AG04450 (cell line): ENCODE measurements at regions of chr6 and their contacts with region 1.

Region 1: GRCh38 chr6:14046476-14047068 is 71.0 kb upstream of the CD83 start:
- DNase-seq: no peak
- H3K4me3 ChIP-seq: no peak overlapping the region
- H3K27ac ChIP-seq: no peak overlapping the region
- H3K27me3 ChIP-seq: no peaks in the 10 kb centered on the region
- CTCF ChIP-seq: peak; percentile 84

Region 2: DNA sequence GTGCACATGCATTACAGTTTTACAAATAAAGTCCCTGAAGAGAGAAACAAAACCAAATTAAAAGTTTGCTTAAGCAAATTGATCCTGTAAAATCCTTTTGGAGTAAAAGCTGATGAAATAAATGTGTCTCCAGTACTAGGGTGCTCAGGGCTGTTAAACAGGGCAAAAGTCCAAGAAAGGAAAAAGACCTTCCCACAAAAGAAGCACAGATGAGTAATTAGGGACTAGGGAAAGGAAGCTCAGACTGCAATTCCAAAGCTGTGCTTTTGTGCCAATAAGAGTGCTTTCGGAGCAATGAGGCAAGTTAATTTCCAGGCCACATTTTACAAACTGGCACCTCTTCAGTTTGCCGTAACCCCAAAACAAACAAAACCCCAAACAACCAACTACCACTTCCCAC is 132.2 kb before region 1 on chr6:
- CTCF ChIA-PET with region 1: interaction called, 130 read pairs
- POLR2A ChIA-PET with region 1: no interaction called
- DNase-seq: no peak
- H3K4me3 ChIP-seq: no peak overlapping the region
- H3K27ac ChIP-seq: no peak overlapping the region
- H3K27me3 ChIP-seq: no peaks in the 10 kb centered on the region
- CTCF ChIP-seq: no peak

Region 3: DNA sequence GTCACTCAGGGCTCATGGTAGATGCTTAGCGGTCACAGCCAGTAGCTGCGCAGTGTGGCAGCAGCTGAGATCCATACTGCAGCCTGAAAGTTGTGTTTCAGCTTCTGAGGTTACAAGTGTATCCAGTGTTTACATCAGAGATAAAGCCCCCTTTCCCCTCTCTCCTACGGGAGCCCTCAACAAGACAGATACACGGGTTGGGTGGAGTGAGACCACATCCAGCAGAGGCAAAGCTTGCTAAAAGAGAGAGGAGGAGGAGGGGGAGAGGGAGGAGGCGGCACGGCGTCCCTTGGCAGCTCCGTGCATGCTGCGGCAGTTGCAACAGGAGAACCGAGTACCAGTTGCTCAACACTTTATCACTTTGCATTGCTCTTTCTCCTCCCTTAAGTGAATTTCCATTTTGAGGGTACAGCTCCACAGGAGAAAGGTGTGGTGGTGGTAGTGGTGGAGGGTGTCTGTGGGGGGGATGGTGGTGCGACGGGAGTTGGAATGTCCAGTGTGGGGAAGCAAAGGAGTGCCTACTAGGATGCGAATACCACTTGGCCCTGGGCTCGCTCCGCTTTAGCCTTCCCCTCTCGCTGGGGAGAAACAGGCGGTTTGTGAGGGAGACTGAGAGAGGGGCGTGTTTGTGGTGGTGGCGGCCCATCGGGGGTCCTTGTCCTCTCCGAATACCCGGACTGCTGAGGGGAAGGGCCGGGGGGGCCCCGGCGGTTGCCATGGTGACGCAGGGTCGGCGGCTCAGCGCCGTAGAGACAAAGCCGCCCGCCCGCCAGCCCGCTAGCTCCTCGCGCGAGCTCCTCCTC is 122.2 kb before region 1 on chr6:
- CTCF ChIA-PET with region 1: interaction called, 38 read pairs
- POLR2A ChIA-PET with region 1: no interaction called
- DNase-seq: no peak
- H3K4me3 ChIP-seq: peak overlapping the region; percentile 63
- H3K27ac ChIP-seq: peak overlapping the region; percentile 62
- H3K27me3 ChIP-seq: no peaks in the 10 kb centered on the region
- CTCF ChIP-seq: no peak

Region 4: GRCh38 chr6:14058029-14058695 is 11.6 kb after region 1 on chr6:
- CTCF ChIA-PET with region 1: interaction called, 81 read pairs
- POLR2A ChIA-PET with region 1: no interaction called
- DNase-seq: no peak
- H3K4me3 ChIP-seq: no peak overlapping the region
- H3K27ac ChIP-seq: no peak overlapping the region
- H3K27me3 ChIP-seq: no peaks in the 10 kb centered on the region
- CTCF ChIP-seq: no peak

Region 5: GRCh38 chr6:14086701-14087100 is 40.1 kb after region 1 on chr6:
- CTCF ChIA-PET with region 1: no interaction called
- POLR2A ChIA-PET with region 1: no interaction called
- DNase-seq: no peak
- H3K4me3 ChIP-seq: no peak overlapping the region
- H3K27ac ChIP-seq: no peak overlapping the region
- H3K27me3 ChIP-seq: peaks cover 5% of the 10 kb centered on the region
- CTCF ChIP-seq: no peak